Prostate gland (tissue), 2 donors: ENCODE measurements at regions of chr14 and their contacts with region 1.

Region 1: DNA sequence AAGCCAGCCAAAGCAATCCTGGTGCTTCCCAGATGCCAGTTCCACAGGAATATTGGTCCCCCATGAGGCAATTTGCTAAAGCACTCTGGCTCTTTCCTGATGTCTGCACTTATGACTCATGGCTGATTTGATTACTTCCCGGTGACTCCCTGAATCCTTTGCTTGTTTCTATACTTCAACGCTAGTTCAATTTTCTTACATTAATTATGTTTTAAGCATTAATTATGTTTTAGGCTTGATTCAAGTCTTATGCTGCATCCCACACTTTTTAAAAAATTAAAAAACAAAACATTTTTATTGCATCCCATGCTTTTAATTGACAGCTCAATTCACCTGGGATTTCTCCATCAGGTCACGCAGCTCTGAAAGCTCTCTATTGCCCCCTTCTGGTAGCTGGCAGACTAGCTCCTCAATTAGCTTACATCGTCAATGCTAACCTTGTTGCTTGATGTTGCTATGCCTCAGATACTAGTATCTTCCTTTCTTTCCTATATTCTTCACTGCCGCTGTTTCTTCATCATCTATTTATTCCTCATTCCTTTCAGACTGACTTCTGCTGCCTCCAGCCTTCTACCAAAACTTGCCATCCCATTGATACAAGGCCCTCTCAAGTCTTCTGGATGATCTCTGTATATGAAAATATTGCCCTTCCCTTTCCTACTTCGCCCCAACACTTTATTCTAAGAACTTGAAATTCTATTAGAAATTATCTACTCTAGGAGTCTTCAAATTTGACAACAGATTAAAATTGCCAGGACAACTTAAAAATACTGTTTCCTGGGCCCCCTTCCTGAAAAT is 32.0 kb downstream of the TSHR start:
- DNase-seq: peak; percentile 66
- H3K4me3 ChIP-seq: no peak overlapping the region
- H3K27ac ChIP-seq: no peak overlapping the region
- H3K4me1 ChIP-seq: no peaks in the 10 kb centered on the region
- H3K27me3 ChIP-seq: no peaks in the 10 kb centered on the region
- CTCF ChIP-seq: peak; percentile 53 to 87 (median 84)
- POLR2A ChIP-seq: no peak

Region 2: GRCh38 chr14:80954687-80955299 is 32.6 kb before region 1 on chr14:
- intact Hi-C with region 1: loop called (anchors 1 kb)
- DNase-seq: peak; percentile 70
- H3K4me3 ChIP-seq: peak overlapping the region; percentile 24 to 37
- H3K27ac ChIP-seq: no peak overlapping the region
- H3K4me1 ChIP-seq: no peaks in the 10 kb centered on the region
- H3K27me3 ChIP-seq: peaks cover 3% of the 10 kb centered on the region
- CTCF ChIP-seq: peak; percentile 55 to 86 (median 75)
- POLR2A ChIP-seq: no peak

Region 3: DNA sequence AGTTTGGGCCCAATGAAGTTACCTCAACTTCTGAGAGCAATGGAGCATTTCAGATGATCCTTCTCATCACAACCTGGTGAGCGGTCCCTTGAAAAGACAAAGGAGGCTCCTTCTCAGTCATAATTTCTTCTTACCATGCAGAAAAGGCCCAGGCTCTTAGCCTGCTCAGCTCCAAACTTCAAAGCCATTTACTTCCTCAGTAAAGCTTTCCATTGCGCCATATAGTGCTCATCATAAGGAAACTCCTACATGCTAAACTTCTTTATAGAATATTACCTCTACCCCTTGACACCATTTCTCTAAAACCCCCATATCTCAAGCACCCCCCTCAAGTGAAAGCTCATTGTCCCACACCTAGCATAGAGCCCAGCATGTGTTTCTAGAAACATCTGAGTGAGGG is 106.2 kb after region 1 on chr14:
- intact Hi-C with region 1: no loop called
- DNase-seq: no peak
- H3K4me3 ChIP-seq: no peak overlapping the region
- H3K27ac ChIP-seq: no peak overlapping the region
- H3K4me1 ChIP-seq: no peaks in the 10 kb centered on the region
- H3K27me3 ChIP-seq: no peaks in the 10 kb centered on the region
- CTCF ChIP-seq: no peak
- POLR2A ChIP-seq: no peak